CD4-positive, alpha-beta memory T cell (primary cell): ENCODE measurements at regions of chr14 and their contacts with region 1.

Region 1: DNA sequence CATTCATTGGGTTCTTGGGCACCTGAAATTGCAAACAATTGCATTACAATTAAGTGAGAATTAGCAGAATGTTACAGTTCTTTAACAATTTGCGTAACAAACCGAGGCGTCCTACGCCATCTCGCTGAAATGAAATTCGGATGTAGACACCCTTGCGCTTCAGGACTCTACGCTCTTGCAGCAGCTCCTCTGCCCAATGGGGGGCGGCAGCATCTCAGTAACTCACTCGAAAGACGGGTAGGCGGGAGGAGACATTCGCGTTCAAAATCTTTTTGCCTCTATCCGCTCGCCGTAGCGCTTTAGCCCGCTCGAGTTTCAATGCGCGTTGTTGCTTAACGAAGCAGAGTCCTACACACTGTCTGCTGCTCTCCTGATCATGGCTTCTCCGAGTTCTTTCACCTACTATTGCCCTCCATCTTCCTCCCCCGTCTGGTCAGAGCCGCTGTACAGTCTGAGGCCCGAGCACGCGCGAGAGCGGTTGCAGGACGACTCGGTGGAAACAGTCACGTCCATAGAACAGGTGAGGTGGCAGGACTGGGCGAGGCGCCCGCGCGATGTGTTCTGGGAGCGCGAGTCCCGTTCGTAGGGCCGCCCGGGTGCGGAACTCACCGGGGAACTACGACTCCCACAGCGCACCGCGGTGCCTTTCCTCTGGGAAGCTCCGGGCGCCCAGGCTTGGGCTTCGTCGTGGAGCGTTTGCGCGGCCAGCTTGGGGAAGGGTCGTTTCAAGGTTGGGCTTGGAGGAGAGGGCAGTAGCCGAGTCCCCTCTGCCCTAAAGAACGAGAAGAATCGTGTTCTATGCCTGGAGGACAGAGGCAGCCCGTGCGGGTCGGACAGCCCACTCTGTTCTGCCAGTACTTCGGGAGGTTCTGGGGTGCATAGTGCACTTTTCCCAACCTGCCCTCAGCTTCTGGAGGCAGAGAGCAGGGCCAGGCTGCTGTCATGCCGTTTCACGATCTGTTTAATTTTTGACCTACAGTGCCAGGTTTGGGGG is at the start of gene FNTB:
- DNase-seq: peak; percentile 93 to 96 (median 96)
- H3K4me3 ChIP-seq: peak within 1 kb of the TSS; percentile 57 to 98
- H3K4me3 Mint-ChIP-seq: peak within 1 kb of the TSS; percentile 92 to 100 (median 98)
- H3K27ac ChIP-seq: peak within 1 kb of the TSS; percentile 70
- H3K27ac Mint-ChIP-seq: peak within 1 kb of the TSS; percentile 89 to 100 (median 98)
- H3K4me1 ChIP-seq: peaks cover 48% of the 10 kb centered on the region
- H3K4me1 Mint-ChIP-seq: peaks cover 29 to 66% (median 45%) of the 10 kb centered on the region in 4 donors
- H3K27me3 ChIP-seq: no peaks in the 10 kb centered on the region
- H3K27me3 Mint-ChIP-seq: peaks cover 2 to 9% of the 10 kb centered on the region in 2 donors
- total RNA-seq, gene FNTB: 12.1 to 13.6 TPM

Region 2: DNA sequence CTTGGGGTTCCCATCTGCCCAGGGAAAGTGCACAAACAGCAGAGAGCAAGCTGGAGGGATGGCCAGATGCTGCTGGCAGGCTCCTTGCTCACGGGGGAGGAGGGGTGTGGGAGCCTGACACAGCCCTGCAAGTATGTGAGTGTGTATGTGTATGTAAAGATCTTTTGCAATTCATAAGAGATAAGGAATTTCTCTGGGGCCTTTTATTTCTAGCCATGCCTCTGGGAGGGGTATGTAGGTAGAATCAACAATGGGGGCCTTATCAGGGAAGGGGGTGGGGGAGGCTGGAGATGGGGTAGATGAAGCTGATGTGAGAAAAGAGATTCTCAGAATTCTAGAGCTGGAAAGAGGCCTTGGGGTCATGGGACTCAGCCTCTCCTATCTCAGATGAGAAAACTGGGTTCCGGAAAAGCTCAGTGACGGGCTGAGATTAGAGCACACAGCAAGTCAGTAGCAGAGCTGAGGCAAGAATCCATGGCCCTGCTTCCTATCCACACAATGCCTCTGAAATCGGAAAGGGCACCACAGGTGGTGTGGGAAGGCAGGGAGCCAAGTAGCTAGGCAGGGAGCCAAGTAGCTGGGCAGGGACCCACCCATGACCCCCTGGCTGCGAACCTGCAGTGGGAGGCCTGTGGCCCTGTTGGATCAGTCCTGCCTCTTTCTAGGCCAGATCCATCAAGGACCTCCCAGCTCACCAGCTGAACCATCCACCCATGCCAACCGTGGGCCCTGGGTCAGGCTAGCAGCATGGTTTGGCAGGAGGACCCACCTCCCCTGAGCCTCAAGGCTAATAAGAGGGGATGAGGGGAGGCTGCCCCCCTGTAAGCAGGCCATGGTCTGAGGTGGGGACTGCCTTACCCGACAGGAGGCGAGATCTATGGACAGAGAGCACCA is 227.9 kb before region 1 on chr14:
- CTCF ChIA-PET with region 1: no interaction called
- POLR2A ChIA-PET with region 1: interaction called, 4 read pairs
- intact Hi-C with region 1: loop called (anchors 5 kb)
- DNase-seq: peak in 1 of 5 donors; percentile 26
- H3K4me3 ChIP-seq: no peak overlapping the region
- H3K4me3 Mint-ChIP-seq: peak overlapping the region in 7 of 8 donors; percentile 6 to 74 (median 40)
- H3K27ac ChIP-seq: peak overlapping the region; percentile 58
- H3K27ac Mint-ChIP-seq: peak overlapping the region; percentile 85 to 98 (median 95)
- H3K4me1 ChIP-seq: peaks cover 98% of the 10 kb centered on the region
- H3K4me1 Mint-ChIP-seq: peaks cover 70 to 100% (median 87%) of the 10 kb centered on the region in 4 donors
- H3K27me3 ChIP-seq: no peaks in the 10 kb centered on the region
- H3K27me3 Mint-ChIP-seq: no peaks in the 10 kb centered on the region

Region 3: DNA sequence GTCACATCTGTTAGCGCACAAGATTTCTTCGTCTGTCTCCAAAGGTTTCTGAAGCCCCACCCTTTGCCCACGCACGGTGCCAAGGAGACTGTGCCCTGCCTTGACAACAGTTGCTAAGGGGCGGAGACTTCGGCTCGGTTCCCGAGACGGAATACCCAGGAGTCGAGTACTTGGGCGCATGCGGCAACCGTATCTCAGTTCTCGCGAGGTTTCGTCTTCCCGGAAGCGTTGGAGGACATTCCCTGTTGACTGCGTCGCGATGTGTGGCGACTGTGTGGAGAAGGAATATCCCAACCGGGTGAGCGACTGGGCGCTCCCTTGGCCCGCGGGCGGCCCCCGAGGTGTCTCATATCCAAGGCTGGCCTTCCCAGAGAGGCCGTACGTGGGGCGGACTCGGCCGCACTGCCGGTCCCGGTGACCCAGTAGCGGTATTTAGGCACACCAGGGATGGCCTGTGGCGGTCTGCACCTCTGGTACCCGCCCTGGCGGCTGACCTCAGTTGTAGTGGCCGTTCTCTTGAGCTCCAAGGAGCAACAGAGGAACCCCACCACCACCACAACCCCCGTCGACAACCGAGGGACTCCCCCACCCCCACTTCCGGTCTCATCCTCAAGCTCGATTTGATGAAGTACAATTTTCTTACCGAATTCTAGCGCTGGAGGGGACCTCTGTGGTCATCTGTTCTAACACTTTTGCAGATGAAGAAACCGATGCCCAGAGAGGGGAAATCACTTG is 72.5 kb before region 1 on chr14 and contains the start of gene CHURC1:
- CTCF ChIA-PET with region 1: interaction called, 5 read pairs
- POLR2A ChIA-PET with region 1: interaction called, 19 read pairs
- intact Hi-C with region 1: loop called (anchors 1 kb)
- DNase-seq: peak; percentile 94 to 99 (median 97)
- H3K4me3 ChIP-seq: peak within 1 kb of the TSS; percentile 90 to 99
- H3K4me3 Mint-ChIP-seq: peak within 1 kb of the TSS; percentile 84 to 95 (median 90)
- H3K27ac ChIP-seq: peak within 1 kb of the TSS; percentile 100
- H3K27ac Mint-ChIP-seq: peak within 1 kb of the TSS; percentile 92 to 99 (median 98)
- H3K4me1 ChIP-seq: peaks cover 46% of the 10 kb centered on the region
- H3K4me1 Mint-ChIP-seq: peaks cover 33 to 56% (median 45%) of the 10 kb centered on the region in 4 donors
- H3K27me3 ChIP-seq: no peaks in the 10 kb centered on the region
- H3K27me3 Mint-ChIP-seq: peaks cover 0 to 1% of the 10 kb centered on the region in 2 donors
- total RNA-seq, gene CHURC1: 112 to 116 TPM

Region 4: DNA sequence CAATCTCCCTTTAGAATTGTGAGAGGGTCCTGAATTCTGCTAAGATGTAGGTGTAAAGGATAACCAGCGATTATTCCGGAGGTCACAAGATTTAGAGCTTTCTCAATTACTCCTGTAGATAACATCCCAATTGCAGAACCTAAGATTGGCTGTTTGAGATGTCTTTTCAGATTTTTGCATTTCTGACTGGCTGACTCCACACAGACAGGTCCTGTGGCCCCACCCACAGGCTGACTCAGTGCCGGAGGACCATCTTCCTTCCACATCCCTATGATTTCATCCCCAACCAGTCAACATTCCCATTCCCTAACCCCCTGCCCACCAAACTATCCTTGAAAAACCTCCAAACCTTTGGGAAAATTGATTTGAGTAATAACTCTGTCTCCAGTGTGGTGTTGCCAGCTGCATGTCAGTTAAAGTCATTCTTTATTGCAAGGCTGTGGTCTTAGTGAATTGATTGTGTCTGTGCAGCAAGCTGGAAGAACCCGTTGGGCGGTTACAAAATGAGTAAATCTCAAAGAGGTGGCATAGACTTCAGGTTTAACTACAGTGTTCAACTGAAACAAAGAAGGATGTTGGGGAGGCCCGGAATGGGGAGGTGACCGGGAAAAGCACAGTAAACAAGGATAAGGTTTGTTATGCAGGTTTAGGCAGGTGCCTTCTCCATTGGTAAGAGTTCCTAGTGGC is 10.4 kb after region 1 on chr14:
- CTCF ChIA-PET with region 1: interaction called, 9 read pairs
- POLR2A ChIA-PET with region 1: interaction called, 10 read pairs
- intact Hi-C with region 1: no loop called
- DNase-seq: peak in 4 of 5 donors; percentile 31 to 44 (median 38)
- H3K4me3 ChIP-seq: no peak overlapping the region
- H3K4me3 Mint-ChIP-seq: peak overlapping the region in 6 of 8 donors; percentile 74 to 91 (median 86)
- H3K27ac ChIP-seq: no peak overlapping the region
- H3K27ac Mint-ChIP-seq: peak overlapping the region in 6 of 7 donors; percentile 15 to 76 (median 70)
- H3K4me1 ChIP-seq: no peaks in the 10 kb centered on the region
- H3K4me1 Mint-ChIP-seq: peaks cover 5 to 26% (median 11%) of the 10 kb centered on the region in 4 donors
- H3K27me3 ChIP-seq: no peaks in the 10 kb centered on the region
- H3K27me3 Mint-ChIP-seq: no peaks in the 10 kb centered on the region

Region 5: GRCh38 chr14:65164068-65164824 is 177.4 kb after region 1 on chr14:
- CTCF ChIA-PET with region 1: interaction called, 3 read pairs
- POLR2A ChIA-PET with region 1: no interaction called
- intact Hi-C with region 1: loop called (anchors 2 kb)
- DNase-seq: peak in 4 of 5 donors; percentile 57 to 64 (median 59)
- H3K4me3 ChIP-seq: no peak overlapping the region
- H3K4me3 Mint-ChIP-seq: no peak overlapping the region
- H3K27ac ChIP-seq: no peak overlapping the region
- H3K27ac Mint-ChIP-seq: no peak overlapping the region
- H3K4me1 ChIP-seq: no peaks in the 10 kb centered on the region
- H3K4me1 Mint-ChIP-seq: peaks cover 0 to 7% (median 5%) of the 10 kb centered on the region in 4 donors
- H3K27me3 ChIP-seq: no peaks in the 10 kb centered on the region
- H3K27me3 Mint-ChIP-seq: no peaks in the 10 kb centered on the region

Region 6: DNA sequence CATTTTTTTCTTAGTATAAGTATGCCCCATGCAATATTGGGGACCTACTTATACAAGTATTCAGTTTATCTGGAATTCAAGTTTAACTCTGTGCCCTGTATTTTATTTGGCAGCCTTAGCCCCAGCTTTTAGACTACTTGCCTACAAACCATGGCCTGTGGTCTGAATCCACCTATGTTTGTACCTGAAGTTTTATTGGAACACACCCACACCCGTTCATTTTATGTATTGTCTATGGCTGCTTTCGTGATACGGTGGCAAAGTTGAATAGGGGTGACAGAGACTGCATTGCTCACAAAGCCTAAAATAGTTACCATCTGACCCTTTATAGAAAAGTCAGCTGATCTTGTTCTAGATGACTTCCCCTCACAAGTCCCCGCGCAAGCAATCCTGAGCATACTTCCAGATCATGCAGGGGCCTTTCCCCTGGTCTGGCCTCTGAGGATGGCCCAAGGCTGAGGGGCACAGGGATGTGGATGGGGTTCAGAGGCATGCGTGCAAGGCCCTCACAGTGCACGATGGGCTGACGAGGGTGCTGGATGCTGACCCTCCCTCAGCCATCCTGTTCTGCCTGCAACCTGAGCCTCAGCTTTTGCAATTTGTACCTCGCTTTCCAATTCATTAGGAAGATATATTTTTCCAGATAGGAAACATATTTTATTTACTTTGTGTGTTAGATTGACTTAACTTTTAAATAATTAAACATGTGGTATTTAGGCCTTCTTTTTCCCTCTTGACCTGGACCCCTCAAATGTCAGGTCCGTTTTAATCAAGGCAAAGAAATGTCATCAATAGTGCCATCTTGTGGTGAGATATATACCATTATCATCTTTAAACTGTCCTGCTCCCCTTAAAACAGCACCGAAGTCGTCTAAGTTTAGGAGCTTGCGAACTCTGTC is 972.0 kb after region 1 on chr14:
- CTCF ChIA-PET with region 1: interaction called, 3 read pairs
- POLR2A ChIA-PET with region 1: no interaction called
- intact Hi-C with region 1: loop called (anchors 1 kb)
- DNase-seq: peak in 4 of 5 donors; percentile 30 to 47 (median 45)
- H3K4me3 ChIP-seq: no peak overlapping the region
- H3K4me3 Mint-ChIP-seq: no peak overlapping the region
- H3K27ac ChIP-seq: no peak overlapping the region
- H3K27ac Mint-ChIP-seq: no peak overlapping the region
- H3K4me1 ChIP-seq: peaks cover 23% of the 10 kb centered on the region
- H3K4me1 Mint-ChIP-seq: peaks cover 18 to 32% (median 24%) of the 10 kb centered on the region in 4 donors
- H3K27me3 ChIP-seq: no peaks in the 10 kb centered on the region
- H3K27me3 Mint-ChIP-seq: no peaks in the 10 kb centered on the region